Mammary epithelial cell (primary cell): ENCODE measurements at regions of chr11 and their contacts with region 1.

Region 1: GRCh38 chr11:65274735-65275682 is 13.2 kb downstream of the POLA2 start:
- DNase-seq: peak; percentile 74
- H3K4me3 ChIP-seq: no peak overlapping the region
- H3K27ac ChIP-seq: peak overlapping the region; percentile 6
- H3K4me1 ChIP-seq: peaks cover 38% of the 10 kb centered on the region
- H3K27me3 ChIP-seq: no peaks in the 10 kb centered on the region
- CTCF ChIP-seq: peak; percentile 63 to 77

Region 2: DNA sequence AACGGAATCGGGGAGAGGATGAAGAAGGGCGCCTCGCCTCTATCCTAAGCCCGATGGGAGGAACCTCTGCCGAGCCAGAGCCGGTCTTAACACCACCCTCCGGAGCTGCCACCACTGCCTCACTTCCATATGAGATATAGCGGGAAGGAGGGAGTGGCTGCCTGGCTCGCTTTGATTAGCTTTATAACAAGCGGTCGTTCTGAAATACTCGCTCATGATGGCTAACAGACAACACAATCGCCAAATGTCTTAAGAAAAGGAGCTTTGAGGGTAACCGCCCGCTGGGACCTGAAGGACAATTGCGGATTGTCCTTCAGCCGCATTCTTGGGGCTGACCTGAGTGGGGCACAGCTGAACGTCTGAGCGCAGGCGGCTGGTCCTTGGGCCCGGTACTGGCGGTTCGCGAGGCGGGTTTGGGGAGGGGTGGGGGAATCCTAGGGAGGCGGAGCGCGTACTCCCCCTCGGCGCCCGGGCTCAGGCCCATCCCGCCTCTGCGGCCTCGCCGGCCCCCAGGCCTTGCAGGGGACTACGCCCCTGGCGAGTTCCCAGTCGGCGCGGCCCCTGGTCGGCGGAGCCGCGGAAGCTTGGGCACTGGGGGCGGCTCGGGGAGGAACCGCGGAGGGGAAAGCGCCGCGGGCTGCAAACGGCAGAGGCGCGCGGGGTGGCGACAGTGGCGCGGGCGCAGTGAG is 1784.3 kb before region 1 on chr11 and contains the start of gene PLAAT5:
- CTCF ChIA-PET with region 1: no interaction called
- dilution Hi-C with region 1: no loop called
- in situ Hi-C with region 1: no loop called
- intact Hi-C with region 1: no loop called
- DNase-seq: no peak
- H3K4me3 ChIP-seq: peak within 1 kb of the TSS in 2 of 3 experiments; percentile 23 to 33
- H3K27ac ChIP-seq: no peak within 1 kb of the TSS
- H3K4me1 ChIP-seq: peaks cover 9% of the 10 kb centered on the region
- H3K27me3 ChIP-seq: peaks cover 19% of the 10 kb centered on the region
- CTCF ChIP-seq: no peak
- total RNA-seq, gene PLAAT5: under 0.01 TPM in 1 of 2 donors, not detected in the other

Region 3: DNA sequence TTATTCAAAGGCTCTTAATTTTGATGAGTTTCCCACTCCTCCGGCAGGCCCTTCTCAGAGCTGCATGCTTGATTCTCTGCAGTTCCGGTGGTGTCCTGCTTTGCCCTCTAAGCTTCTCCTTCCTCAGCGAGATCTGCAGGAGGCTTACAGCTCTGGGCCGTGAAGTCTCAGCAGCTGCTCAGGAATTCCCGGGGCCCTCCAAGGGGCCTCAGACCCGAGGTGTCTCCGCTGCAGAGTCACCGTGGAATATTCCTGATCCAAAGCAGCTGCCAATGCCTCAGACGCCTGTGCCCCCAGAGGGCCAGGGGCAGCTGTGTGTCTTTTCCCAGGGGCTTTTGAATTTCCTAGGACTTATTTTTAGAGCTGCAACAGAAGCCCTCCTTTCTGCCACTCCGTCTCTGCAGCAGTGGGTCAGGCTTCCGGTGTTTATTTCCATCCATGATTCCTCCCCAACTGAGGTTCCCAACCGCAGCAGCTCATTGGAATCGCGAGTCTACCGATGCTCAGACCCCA is 878.9 kb before region 1 on chr11:
- CTCF ChIA-PET with region 1: interaction called, 24 read pairs
- dilution Hi-C with region 1: no loop called
- in situ Hi-C with region 1: no loop called
- intact Hi-C with region 1: no loop called
- DNase-seq: no peak
- H3K4me3 ChIP-seq: no peak overlapping the region
- H3K27ac ChIP-seq: no peak overlapping the region
- H3K4me1 ChIP-seq: peaks cover 17% of the 10 kb centered on the region
- H3K27me3 ChIP-seq: no peaks in the 10 kb centered on the region
- CTCF ChIP-seq: no peak

Region 4: GRCh38 chr11:65060913-65061408 is 214.0 kb before region 1 on chr11:
- CTCF ChIA-PET with region 1: interaction called, 18 read pairs
- dilution Hi-C with region 1: no loop called
- in situ Hi-C with region 1: no loop called
- intact Hi-C with region 1: no loop called
- DNase-seq: peak; percentile 8
- H3K4me3 ChIP-seq: no peak overlapping the region
- H3K27ac ChIP-seq: no peak overlapping the region
- H3K4me1 ChIP-seq: no peaks in the 10 kb centered on the region
- H3K27me3 ChIP-seq: no peaks in the 10 kb centered on the region
- CTCF ChIP-seq: no peak

Region 5: GRCh38 chr11:65293909-65294381 is 18.9 kb after region 1 on chr11:
- CTCF ChIA-PET with region 1: interaction called, 12 read pairs
- dilution Hi-C with region 1: no loop called
- in situ Hi-C with region 1: no loop called
- intact Hi-C with region 1: no loop called
- DNase-seq: no peak
- H3K4me3 ChIP-seq: no peak overlapping the region
- H3K27ac ChIP-seq: no peak overlapping the region
- H3K4me1 ChIP-seq: no peaks in the 10 kb centered on the region
- H3K27me3 ChIP-seq: no peaks in the 10 kb centered on the region
- CTCF ChIP-seq: no peak

Region 6: GRCh38 chr11:65314501-65315203 is 39.6 kb after region 1 on chr11 and contains the start of gene CDC42EP2:
- CTCF ChIA-PET with region 1: interaction called, 27 read pairs
- dilution Hi-C with region 1: no loop called
- in situ Hi-C with region 1: loop called in 1 of 2 experiments (anchors 5 kb)
- intact Hi-C with region 1: loop called (anchors 1 kb)
- DNase-seq: peak; percentile 82
- H3K4me3 ChIP-seq: peak within 1 kb of the TSS; percentile 77 to 91 (median 88)
- H3K27ac ChIP-seq: peak within 1 kb of the TSS; percentile 46
- H3K4me1 ChIP-seq: peaks cover 13% of the 10 kb centered on the region
- H3K27me3 ChIP-seq: no peaks in the 10 kb centered on the region
- CTCF ChIP-seq: no peak
- total RNA-seq, gene CDC42EP2: 6.8 to 24.8 TPM

Region 7: DNA sequence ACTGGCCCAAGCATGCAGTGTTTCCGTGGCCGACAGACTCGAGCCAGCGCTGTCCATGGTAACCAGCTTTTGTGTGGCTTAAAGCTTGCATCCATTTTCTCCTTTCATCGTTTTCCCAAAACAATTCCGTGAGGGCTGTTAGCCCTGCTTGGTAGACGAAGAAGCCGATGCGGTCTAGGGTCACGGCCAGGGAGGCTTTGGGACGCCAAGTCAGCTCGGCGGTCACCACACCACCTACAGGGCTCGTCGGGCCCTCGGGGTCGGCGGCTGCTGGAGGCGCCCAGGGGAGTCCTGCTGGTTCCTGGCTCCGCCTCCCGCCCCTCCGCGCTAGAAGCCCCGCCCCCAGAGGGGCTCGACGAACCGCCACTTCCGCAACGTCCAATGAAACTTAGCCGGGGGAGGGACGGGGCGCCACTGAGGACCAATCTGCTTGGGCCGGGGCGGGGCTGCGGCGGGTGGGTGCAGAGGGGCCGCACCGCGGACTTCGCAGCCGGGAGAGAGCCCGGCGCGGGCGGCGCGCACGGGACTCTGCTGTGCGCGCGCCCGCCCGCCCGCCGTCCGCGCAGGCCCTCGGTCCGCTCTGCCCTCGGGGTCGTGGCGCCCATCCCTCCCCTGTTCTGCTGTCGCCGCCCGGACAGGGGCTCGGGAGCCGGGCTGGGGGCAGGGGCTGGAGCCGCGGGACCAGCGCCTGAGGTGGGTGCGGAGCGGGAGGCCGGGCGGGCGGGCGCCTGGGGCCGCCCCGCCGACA is 79.4 kb after region 1 on chr11 and contains the start of gene TIGD3:
- CTCF ChIA-PET with region 1: interaction called, 9 read pairs
- dilution Hi-C with region 1: loop called (anchors 5 kb)
- in situ Hi-C with region 1: no loop called
- intact Hi-C with region 1: no loop called
- DNase-seq: peak; percentile 90
- H3K4me3 ChIP-seq: peak within 1 kb of the TSS; percentile 41 to 72 (median 55)
- H3K27ac ChIP-seq: no peak within 1 kb of the TSS
- H3K4me1 ChIP-seq: peaks cover 15% of the 10 kb centered on the region
- H3K27me3 ChIP-seq: peaks cover 12% of the 10 kb centered on the region
- CTCF ChIP-seq: no peak
- total RNA-seq, gene TIGD3: not detected

Region 8: DNA sequence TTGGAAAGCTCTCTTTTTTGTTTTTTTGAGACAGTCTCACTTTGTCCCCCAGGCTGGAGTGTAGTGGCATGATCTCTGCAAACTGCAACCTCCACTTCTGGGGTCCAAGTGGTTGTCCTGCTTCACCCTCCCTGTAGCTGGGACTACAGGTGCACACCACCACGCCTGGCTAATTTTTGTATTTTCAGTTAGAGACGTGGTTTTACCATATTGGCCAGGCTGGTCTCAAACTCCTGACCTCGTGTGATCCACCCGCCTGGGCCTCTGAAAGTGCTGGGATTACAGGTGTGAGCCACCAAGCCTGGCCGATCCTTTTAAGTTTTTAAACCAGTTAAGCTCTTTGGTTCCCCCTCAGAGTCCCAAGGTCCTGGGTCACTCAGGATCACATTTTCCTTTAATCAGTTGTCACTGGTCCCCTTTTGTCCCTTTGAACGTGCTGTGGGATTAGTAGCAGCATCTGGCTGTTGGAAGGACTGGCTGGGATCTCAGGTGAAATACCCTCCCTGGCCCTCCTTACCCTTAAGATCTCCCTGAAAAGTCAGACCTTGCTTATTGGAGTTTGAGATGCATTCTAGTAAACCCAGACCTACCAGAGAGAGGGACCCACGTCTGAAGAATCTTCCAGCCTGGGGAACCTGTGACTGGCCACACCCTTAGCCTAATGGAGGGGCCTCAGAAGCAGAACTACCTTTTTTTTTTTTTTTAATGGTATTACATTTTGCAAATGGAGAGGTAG is 231.9 kb after region 1 on chr11:
- CTCF ChIA-PET with region 1: interaction called, 9 read pairs
- dilution Hi-C with region 1: no loop called
- in situ Hi-C with region 1: no loop called
- intact Hi-C with region 1: loop called (anchors 5 kb)
- DNase-seq: no peak
- H3K4me3 ChIP-seq: peak overlapping the region in 1 of 3 experiments; percentile 6
- H3K27ac ChIP-seq: peak overlapping the region; percentile 81
- H3K4me1 ChIP-seq: peaks cover 17% of the 10 kb centered on the region
- H3K27me3 ChIP-seq: no peaks in the 10 kb centered on the region
- CTCF ChIP-seq: no peak